ENCODE measurements at regions of chr3 and their contacts with region 1.

Region 1: GRCh38 chr3:185659942-185660921 is 74.1 kb downstream of the SENP2 start:
- DNase-seq: peak; percentile 83
- CTCF ChIP-seq: peak; percentile 97

Region 2: GRCh38 chr3:185430375-185430774 is 229.9 kb before region 1 on chr3:
- in situ Hi-C with region 1: no loop called
- DNase-seq: no peak
- CTCF ChIP-seq: no peak

Region 3: GRCh38 chr3:185519021-185519420 is 141.2 kb before region 1 on chr3:
- in situ Hi-C with region 1: no loop called
- DNase-seq: no peak
- CTCF ChIP-seq: no peak

Region 4: GRCh38 chr3:185764163-185764979 is 104.1 kb after region 1 on chr3:
- in situ Hi-C with region 1: loop called (anchors 10 kb)
- DNase-seq: peak; percentile 24
- CTCF ChIP-seq: no peak

Region 5: DNA sequence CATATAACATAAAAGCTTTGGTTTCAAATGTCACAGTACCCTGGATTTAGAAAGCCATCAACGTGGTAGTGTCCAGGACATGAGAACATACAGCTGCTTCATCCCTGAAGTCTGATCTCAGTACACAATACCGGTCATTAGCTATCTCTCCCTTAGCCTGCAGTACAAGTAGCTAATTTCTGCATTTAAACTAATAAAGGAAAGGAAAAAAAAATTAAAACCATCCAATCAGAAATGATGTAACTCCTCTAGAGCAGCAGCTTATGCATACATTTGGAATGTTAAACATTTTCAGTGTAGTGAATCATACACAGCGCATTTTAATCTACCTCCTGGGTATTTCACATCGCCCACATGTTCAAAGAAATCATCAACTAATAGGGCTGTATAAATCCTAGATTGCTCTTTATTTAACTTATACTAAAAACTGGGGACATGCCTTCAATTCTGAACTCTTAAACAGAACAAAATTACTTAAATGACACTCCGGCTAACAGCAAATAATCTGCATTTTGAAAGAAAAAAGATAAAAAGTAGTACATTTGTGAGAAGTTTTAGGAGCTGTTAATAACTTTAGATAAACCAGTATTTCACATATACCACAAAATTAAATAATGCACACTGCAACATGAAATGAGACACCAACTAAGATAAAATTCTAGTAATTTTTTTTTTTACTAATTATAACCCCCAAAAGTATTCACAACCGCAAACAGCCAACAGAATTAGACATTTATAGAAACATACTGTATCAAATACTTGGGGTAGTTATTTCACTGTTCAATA is 160.9 kb after region 1 on chr3:
- in situ Hi-C with region 1: no loop called
- DNase-seq: no peak
- CTCF ChIP-seq: no peak